HCT116 (cell line): ENCODE measurements at regions of chr12 and their contacts with region 1.

Region 1: DNA sequence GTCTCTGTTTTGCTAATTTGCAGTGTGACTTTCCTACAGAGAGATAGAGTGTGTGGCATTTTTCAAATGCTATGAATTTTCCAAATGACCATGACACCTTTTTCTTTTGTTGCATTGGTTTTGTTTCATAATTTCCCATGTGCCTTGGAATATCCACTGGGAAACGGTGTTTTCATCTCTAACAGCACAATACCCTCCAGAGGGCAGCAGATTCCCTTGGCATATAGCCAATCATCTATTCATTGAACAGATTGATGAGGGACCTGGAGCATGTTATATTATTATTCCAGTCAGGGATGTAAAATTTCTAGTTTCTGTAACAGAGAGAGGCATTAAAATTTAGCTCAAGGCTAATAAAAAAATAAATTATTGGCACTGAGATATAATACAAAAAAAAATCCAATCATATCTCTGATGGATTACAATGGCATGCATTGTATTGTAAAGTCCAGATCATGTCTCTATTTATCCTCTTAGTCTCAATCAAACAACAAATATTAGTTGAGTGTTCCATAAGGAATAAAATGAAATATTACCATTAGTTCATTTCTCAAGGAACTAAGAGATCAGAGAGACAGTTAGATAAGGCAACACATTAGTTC is 29.6 kb upstream of the NTN4 start:
- DNase-seq: peak; percentile 41
- ATAC-seq: peak; percentile 72
- H3K4me3 ChIP-seq: no peak overlapping the region
- H3K27ac ChIP-seq: no peak overlapping the region
- H3K4me1 ChIP-seq: no peaks in the 10 kb centered on the region
- H3K27me3 ChIP-seq: no peaks in the 10 kb centered on the region
- CTCF ChIP-seq: peak; percentile 60 to 80 (median 72); a peak in 5 of 6 replicates
- POLR2A ChIP-seq: no peak
- RAD21 ChIP-seq: peak; percentile 67

Region 2: DNA sequence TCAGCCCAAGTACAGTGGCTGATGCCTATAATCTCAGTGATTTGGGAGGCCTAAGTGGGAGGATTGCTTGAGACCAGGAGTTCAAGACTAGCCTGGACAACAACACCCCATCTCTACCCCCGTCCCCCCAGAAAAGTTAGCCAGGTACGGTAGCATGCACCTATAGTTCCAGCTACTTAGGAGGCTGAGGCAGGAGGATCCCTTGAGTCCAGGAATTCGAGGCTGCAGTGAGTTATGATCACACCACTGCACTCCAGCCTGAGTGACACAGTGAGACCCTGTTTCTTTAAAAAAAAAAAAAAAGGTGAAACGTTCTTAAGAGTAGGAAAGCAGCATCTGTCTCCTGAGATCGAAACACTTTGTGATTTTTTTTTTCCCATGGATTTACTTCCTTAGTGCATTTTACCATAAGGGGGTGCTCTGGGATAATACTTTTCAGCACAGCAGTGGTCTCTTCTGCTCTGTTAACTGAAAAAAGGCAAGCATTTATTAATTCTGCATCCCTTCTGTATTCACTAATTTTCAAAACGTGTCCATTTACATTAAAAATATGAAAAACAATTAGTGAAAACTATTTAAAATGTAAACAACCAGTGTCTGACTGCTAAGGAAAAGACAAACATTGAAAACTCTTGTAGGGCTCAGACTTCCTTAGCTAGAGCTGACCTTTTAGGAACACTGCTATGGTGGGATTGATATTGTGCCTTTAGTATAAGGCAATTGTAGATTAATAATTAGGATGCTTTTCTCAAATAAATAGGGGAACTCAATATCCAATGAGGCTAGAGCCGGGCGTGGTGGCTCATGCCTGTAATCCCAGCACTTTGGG is 237.8 kb before region 1 on chr12:
- CTCF ChIA-PET with region 1: interaction called, 32 read pairs
- POLR2A ChIA-PET with region 1: no interaction called
- RAD21 ChIA-PET with region 1: no interaction called
- intact Hi-C with region 1: loop called (anchors 1 kb)
- DNase-seq: peak; percentile 51
- ATAC-seq: peak; percentile 85
- H3K4me3 ChIP-seq: no peak overlapping the region
- H3K27ac ChIP-seq: no peak overlapping the region
- H3K4me1 ChIP-seq: no peaks in the 10 kb centered on the region
- H3K27me3 ChIP-seq: no peaks in the 10 kb centered on the region
- CTCF ChIP-seq: peak; percentile 43 to 72 (median 60)
- POLR2A ChIP-seq: no peak
- RAD21 ChIP-seq: peak; percentile 88

Region 3: DNA sequence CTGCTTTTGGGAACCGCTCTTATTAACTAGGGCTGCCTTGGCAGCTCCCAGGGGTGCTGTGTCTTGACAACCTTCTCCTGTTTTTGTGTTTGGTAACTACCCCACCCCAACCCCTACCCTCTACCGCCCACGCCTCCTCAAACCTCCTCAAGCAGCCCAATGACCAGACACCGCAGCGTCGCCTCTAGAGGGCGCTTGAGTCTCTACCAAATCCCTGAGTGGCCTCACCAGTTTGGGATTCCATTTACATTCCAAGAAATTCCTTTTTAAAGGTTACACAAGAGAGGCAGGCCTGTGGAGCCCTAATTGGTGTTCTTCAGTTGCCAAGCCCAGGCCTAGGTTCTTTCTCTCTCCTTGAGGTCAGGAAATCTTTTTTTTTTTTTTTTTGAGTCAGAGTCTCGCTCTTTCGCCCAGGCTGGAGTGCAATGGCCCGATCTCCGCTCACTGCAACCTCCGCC is 196.6 kb before region 1 on chr12:
- CTCF ChIA-PET with region 1: no interaction called
- POLR2A ChIA-PET with region 1: no interaction called
- RAD21 ChIA-PET with region 1: no interaction called
- intact Hi-C with region 1: loop called (anchors 1 kb)
- DNase-seq: peak; percentile 66
- ATAC-seq: peak; percentile 95
- H3K4me3 ChIP-seq: no peak overlapping the region
- H3K27ac ChIP-seq: no peak overlapping the region
- H3K4me1 ChIP-seq: peaks cover 0 to 13% of the 10 kb centered on the region in 2 experiments; a peak in 2 of 4 replicates
- H3K27me3 ChIP-seq: no peaks in the 10 kb centered on the region
- CTCF ChIP-seq: peak; percentile 73 to 90 (median 81)
- POLR2A ChIP-seq: no peak
- RAD21 ChIP-seq: peak; percentile 89

Region 4: GRCh38 chr12:95848575-95849388 is 28.6 kb after region 1 on chr12:
- CTCF ChIA-PET with region 1: interaction called, 5 read pairs
- POLR2A ChIA-PET with region 1: no interaction called
- RAD21 ChIA-PET with region 1: no interaction called
- intact Hi-C with region 1: loop called (anchors 1 kb)
- DNase-seq: no peak
- ATAC-seq: peak; percentile 78
- H3K4me3 ChIP-seq: no peak overlapping the region
- H3K27ac ChIP-seq: no peak overlapping the region
- H3K4me1 ChIP-seq: no peaks in the 10 kb centered on the region
- H3K27me3 ChIP-seq: no peaks in the 10 kb centered on the region
- CTCF ChIP-seq: peak; percentile 41 to 61 (median 56); a peak in 4 of 6 replicates
- POLR2A ChIP-seq: no peak
- RAD21 ChIP-seq: peak; percentile 79

Region 5: DNA sequence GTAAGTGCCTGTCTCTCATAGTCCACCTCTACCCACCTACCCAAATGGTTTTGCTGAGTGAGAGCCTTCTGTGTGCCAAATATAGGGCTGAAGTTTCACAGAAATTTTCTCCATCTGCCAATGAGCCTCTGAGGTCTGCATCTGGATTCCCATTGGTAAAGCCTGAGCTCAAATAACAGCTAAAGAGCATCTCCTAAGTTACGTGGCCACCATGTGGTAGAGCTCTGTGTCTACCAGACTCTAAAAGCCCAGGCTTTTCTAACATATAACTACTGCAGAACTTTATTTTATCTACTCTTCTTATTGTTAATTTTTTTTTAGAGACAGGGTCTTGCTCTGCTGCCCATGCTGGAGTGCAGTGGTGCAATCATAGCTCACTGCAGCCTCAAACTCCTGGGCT is 138.9 kb after region 1 on chr12:
- CTCF ChIA-PET with region 1: interaction called, 3 read pairs
- POLR2A ChIA-PET with region 1: no interaction called
- RAD21 ChIA-PET with region 1: no interaction called
- intact Hi-C with region 1: loop called (anchors 5 kb)
- DNase-seq: peak; percentile 29
- ATAC-seq: peak; percentile 84
- H3K4me3 ChIP-seq: no peak overlapping the region
- H3K27ac ChIP-seq: no peak overlapping the region
- H3K4me1 ChIP-seq: no peaks in the 10 kb centered on the region
- H3K27me3 ChIP-seq: no peaks in the 10 kb centered on the region
- CTCF ChIP-seq: peak in 2 of 3 experiments; percentile 36 to 41; a peak in 3 of 6 replicates
- POLR2A ChIP-seq: no peak
- RAD21 ChIP-seq: peak; percentile 70

Region 6: GRCh38 chr12:96108321-96108720 is 288.1 kb after region 1 on chr12:
- CTCF ChIA-PET with region 1: no interaction called
- POLR2A ChIA-PET with region 1: no interaction called
- RAD21 ChIA-PET with region 1: no interaction called
- intact Hi-C with region 1: no loop called
- DNase-seq: no peak
- ATAC-seq: peak; percentile 47; the same call in 1 of the 2 replicates
- H3K4me3 ChIP-seq: no peak overlapping the region
- H3K27ac ChIP-seq: no peak overlapping the region
- H3K4me1 ChIP-seq: peaks cover 0 to 5% of the 10 kb centered on the region in 2 experiments; a peak in 1 of 4 replicates
- H3K27me3 ChIP-seq: no peaks in the 10 kb centered on the region
- CTCF ChIP-seq: no peak
- POLR2A ChIP-seq: no peak
- RAD21 ChIP-seq: no peak